ENCODE measurements at regions of chr3 and their contacts with region 1.

Region 1: DNA sequence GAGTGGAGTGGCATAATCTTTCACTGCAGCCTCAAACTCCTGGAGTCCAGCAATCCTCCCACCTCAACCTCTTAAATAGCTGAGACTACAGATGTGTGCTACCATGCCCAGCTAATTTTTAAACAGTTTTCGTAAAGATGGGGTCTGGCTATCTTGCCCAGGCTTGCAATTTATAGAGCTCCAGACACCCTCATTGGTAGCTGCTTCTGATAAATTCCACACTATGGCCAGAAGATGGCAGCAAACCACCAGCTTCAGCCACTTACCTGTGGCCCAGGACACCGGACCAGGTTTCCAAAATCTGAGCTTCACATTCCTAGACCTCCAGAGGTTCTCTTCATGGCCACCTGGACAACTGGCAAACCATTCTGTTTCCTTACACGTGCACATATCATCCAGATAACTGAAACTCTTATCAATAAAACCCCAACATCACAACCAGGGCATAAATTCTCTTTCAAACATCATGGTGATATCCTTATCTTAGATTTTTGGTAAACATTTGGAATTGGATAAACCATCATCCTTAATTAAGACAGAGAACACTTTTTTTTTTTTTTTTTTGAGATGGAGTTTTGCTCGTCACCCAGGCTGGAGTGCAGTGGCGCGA is 28.9 kb downstream of the FBXW12 start:
- DNase-seq: peak; percentile 24
- ATAC-seq: peak; percentile 94
- H3K4me3 Mint-ChIP-seq: no peak overlapping the region
- H3K27ac Mint-ChIP-seq: no peak overlapping the region
- H3K4me1 Mint-ChIP-seq: no peaks in the 10 kb centered on the region
- H3K27me3 Mint-ChIP-seq: peaks cover under 1% of the 10 kb centered on the region
- CTCF ChIP-seq: peak; percentile 41

Region 2: DNA sequence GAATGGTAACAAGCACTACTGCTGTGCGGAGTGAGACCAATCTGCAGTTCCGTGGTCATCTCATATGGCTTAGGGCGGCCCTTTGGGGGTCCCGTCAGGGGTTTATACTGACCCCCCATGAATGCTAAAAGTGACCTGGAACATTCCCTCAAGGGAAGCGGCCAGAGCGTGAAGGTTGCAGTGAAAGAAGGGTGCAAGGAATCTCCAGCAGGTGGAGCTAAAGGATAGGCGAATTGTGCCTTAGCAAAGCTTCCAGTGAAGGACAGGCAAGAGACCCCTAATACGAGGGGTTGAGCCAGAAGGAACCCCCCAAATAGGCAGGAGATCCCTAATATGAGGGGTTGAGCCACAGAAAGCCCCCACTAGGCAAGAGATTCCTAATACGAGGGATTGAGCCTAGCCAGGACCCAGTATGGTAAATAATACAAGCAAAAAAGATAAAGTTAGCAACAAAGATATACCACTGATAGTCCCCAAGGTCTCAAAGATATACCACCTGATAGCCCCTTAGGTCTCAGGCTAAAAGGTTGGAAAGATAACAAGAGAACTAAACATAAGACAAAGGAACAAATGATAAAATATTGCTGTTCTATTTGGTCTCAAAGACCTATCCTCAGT is 127.2 kb before region 1 on chr3:
- CTCF ChIA-PET with region 1: interaction called, 26 read pairs
- POLR2A ChIA-PET with region 1: no interaction called
- intact Hi-C with region 1: loop called (anchors 1 kb)
- DNase-seq: peak; percentile 31
- ATAC-seq: peak; percentile 67
- H3K4me3 Mint-ChIP-seq: no peak overlapping the region
- H3K27ac Mint-ChIP-seq: no peak overlapping the region
- H3K4me1 Mint-ChIP-seq: no peaks in the 10 kb centered on the region
- H3K27me3 Mint-ChIP-seq: no peaks in the 10 kb centered on the region
- CTCF ChIP-seq: no peak

Region 3: GRCh38 chr3:48465531-48466378 is 64.8 kb after region 1 on chr3:
- CTCF ChIA-PET with region 1: interaction called, 4 read pairs
- POLR2A ChIA-PET with region 1: interaction called, 3 read pairs
- intact Hi-C with region 1: loop called (anchors 2 kb)
- DNase-seq: peak; percentile 86
- ATAC-seq: peak; percentile 95
- H3K4me3 Mint-ChIP-seq: peak overlapping the region; percentile 89
- H3K27ac Mint-ChIP-seq: peak overlapping the region; percentile 96
- H3K4me1 Mint-ChIP-seq: peaks cover 55% of the 10 kb centered on the region
- H3K27me3 Mint-ChIP-seq: no peaks in the 10 kb centered on the region
- CTCF ChIP-seq: no peak

Region 4: GRCh38 chr3:48518638-48519276 is 117.8 kb after region 1 on chr3:
- CTCF ChIA-PET with region 1: no interaction called
- POLR2A ChIA-PET with region 1: no interaction called
- intact Hi-C with region 1: no loop called
- DNase-seq: no peak
- ATAC-seq: no peak
- H3K4me3 Mint-ChIP-seq: no peak overlapping the region
- H3K27ac Mint-ChIP-seq: no peak overlapping the region
- H3K4me1 Mint-ChIP-seq: peaks cover 5% of the 10 kb centered on the region
- H3K27me3 Mint-ChIP-seq: no peaks in the 10 kb centered on the region
- CTCF ChIP-seq: no peak

Region 5: DNA sequence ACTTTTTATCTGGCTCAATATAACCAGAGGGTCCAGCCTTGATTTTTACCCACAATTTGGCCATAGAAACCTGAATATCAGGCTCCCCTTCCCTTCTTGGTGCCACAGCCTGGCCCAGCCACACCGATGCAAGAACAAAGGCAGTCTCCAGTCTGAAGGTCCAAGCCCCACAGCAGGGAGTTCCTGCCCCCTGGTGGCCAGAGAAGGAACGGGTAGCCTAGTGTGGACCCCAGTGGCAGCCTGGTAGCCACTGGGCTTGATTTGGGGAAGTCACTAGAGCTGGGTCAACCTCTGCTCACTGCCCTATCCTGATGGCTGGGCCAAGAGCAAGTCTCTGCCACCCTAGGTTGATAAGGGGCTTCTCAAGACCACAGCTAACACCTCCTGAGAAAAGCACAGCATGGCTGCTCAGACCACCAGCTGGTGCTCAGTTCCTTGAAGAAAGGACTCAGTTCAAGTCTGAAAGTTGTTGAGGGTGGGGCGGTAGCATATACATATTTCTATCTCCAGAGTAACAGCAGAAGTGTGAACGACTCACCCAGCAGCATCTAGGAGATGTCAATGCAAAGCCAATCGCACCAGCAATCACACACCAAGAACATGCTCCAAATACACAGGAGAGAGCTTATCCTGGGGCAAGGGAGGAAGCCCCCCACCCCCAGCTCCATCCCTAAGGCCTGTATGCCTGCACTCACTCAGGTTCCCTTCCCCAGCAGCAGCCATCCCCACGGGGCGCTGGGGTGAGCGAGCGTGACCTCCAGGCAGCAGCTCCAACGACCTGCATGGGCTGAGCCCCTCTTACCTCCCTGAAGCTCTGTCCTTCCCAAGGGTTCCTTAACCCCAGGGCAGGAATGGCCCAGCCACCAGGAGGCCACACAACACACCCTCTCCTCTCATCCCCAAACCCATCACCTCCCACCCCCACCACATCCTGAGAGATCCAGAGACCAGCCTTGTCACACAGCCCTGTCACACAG is 148.1 kb after region 1 on chr3:
- CTCF ChIA-PET with region 1: interaction called, 90 read pairs
- POLR2A ChIA-PET with region 1: interaction called, 3 read pairs
- intact Hi-C with region 1: loop called (anchors 1 kb)
- DNase-seq: peak; percentile 66
- ATAC-seq: peak; percentile 100
- H3K4me3 Mint-ChIP-seq: no peak overlapping the region
- H3K27ac Mint-ChIP-seq: no peak overlapping the region
- H3K4me1 Mint-ChIP-seq: no peaks in the 10 kb centered on the region
- H3K27me3 Mint-ChIP-seq: no peaks in the 10 kb centered on the region
- CTCF ChIP-seq: no peak

Region 6: GRCh38 chr3:48656061-48656840 is 255.3 kb after region 1 on chr3:
- CTCF ChIA-PET with region 1: interaction called, 7 read pairs
- POLR2A ChIA-PET with region 1: no interaction called
- intact Hi-C with region 1: loop called (anchors 1 kb)
- DNase-seq: peak; percentile 83
- ATAC-seq: peak; percentile 85
- H3K4me3 Mint-ChIP-seq: peak overlapping the region; percentile 78
- H3K27ac Mint-ChIP-seq: no peak overlapping the region
- H3K4me1 Mint-ChIP-seq: peaks cover 14% of the 10 kb centered on the region
- H3K27me3 Mint-ChIP-seq: peaks cover 11% of the 10 kb centered on the region
- CTCF ChIP-seq: no peak

Region 7: DNA sequence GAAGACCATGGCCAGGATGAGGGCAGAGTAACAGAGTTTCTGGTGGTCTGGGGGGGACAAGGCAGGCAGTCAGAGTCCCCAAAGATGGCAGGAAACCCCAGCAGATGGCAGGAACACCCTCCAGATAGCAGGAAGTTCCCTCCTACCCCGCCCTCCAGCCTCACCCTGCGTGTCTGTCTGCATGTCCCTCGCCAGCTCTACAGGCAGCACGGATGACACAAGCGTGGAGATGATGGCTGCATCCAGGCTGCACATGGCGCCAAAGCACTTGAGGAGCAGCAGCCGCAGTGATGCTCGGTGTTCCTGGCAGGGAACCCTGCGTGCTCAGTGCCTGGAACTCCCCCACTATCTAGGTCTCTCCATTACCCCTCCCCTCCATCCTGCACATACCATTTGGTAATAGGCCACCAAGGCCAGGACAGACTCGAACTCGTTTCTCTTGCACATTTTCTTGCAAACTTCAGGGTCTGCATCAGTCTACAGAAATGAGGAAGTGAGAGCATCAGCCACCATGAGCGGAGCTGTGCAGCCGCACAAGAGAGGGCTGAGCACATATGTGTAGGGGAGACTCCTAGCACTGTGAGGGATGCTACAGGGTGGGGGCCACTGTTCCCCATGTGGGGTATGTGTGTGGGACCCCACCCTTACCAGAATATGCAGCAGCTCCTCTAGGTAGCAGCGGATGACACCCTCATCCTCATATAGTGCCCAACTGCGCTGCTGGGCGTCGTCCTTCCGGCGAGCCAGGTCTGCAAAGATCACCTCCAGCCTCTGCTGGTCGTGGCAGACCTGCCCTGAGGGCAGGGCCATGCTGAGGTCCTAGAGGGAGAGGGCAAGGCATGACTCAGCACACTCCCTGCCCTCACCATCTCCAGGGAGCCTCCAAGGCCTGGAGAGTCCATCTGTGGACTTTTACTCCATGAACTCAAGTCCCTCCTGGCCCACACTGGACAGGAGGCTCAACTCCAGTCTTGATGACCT is 278.8 kb after region 1 on chr3:
- CTCF ChIA-PET with region 1: no interaction called
- POLR2A ChIA-PET with region 1: no interaction called
- intact Hi-C with region 1: no loop called
- DNase-seq: no peak
- ATAC-seq: peak; percentile 97
- H3K4me3 Mint-ChIP-seq: no peak overlapping the region
- H3K27ac Mint-ChIP-seq: peak overlapping the region; percentile 51
- H3K4me1 Mint-ChIP-seq: peaks cover 37% of the 10 kb centered on the region
- H3K27me3 Mint-ChIP-seq: no peaks in the 10 kb centered on the region
- CTCF ChIP-seq: no peak

Region 8: DNA sequence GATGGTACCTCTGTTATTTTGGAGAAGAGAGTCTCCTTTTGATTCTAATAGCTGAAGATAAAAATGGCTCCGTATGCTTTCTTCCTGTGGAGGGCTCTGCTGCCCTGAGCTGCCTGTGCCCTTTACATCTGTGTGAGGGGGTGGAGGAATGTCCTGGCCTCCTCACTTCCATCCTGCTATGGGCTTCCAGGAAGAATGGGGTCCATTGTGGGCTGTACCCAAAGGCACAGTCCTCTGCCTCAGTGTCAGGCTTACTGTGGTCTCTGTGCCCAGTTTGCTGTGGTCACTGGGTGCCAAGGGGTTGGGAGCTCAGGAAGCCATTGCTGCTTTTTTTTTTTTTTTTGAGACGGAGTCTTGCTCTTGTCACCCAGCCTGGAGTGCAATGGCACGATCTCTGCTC is 1083.5 kb after region 1 on chr3:
- CTCF ChIA-PET with region 1: no interaction called
- POLR2A ChIA-PET with region 1: no interaction called
- intact Hi-C with region 1: no loop called
- DNase-seq: no peak
- ATAC-seq: no peak
- H3K4me3 Mint-ChIP-seq: no peak overlapping the region
- H3K27ac Mint-ChIP-seq: no peak overlapping the region
- H3K4me1 Mint-ChIP-seq: no peaks in the 10 kb centered on the region
- H3K27me3 Mint-ChIP-seq: no peaks in the 10 kb centered on the region
- CTCF ChIP-seq: no peak